IMR-90 (cell line): ENCODE measurements at regions of chr10 and their contacts with region 1.

Region 1: DNA sequence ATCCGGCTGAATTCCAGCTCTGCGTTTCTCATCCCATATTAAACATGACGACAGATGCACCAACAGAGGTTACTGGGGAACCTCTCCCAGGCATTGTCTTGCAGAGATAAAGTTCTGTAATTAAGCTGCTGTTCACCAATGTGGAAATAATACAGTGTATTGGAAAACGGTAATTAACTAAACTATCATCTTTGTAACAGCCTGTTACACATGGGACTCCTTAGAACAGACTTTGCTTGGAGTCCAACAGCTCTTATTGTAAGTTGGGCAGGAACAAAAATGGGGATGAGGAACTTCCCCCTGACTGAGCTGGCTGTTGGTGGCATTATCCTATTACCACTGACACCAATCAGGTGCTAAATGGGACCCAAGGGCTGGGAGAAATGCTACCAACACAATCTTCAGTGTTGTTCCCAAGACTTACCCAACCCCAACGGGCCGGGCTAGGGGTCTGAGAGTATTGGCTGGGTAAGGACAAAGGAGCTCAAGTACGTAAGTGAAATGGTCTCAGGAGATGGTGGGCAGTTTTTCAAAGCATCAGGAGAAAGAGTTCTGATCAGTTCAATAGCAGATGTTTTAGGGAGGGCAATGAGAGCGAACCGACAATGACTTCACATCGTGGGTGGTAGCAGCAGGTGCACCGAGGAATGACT is 759.4 kb downstream of the GRID1 start:
- DNase-seq: no peak
- ATAC-seq: no peak
- H3K4me3 ChIP-seq: no peak overlapping the region
- H3K27ac ChIP-seq: no peak overlapping the region
- H3K4me1 ChIP-seq: no peaks in the 10 kb centered on the region
- H3K27me3 ChIP-seq: no peaks in the 10 kb centered on the region
- CTCF ChIP-seq: no peak
- POLR2A ChIP-seq: no peak
- RAD21 ChIP-seq: no peak

Region 2: GRCh38 chr10:85761906-85762445 is 154.8 kb after region 1 on chr10:
- CTCF ChIA-PET with region 1: no interaction called
- POLR2A ChIA-PET with region 1: interaction called, 10 read pairs
- dilution Hi-C with region 1: no loop called
- in situ Hi-C with region 1: no loop called
- intact Hi-C with region 1: no loop called
- DNase-seq: no peak
- ATAC-seq: no peak
- H3K4me3 ChIP-seq: no peak overlapping the region
- H3K27ac ChIP-seq: no peak overlapping the region
- H3K4me1 ChIP-seq: no peaks in the 10 kb centered on the region
- H3K27me3 ChIP-seq: no peaks in the 10 kb centered on the region
- CTCF ChIP-seq: no peak
- POLR2A ChIP-seq: no peak
- RAD21 ChIP-seq: no peak